ENCODE measurements at regions of chr3 and their contacts with region 1.

Region 1: GRCh38 chr3:171459942-171460724 is at the start of gene TNIK:
- DNase-seq: peak; percentile 95
- ATAC-seq: peak; percentile 85
- H3K4me3 ChIP-seq: peak within 1 kb of the TSS; percentile 98
- H3K27ac ChIP-seq: peak within 1 kb of the TSS; percentile 80
- H3K4me1 ChIP-seq: peaks cover 10% of the 10 kb centered on the region
- H3K27me3 ChIP-seq: no peaks in the 10 kb centered on the region
- CTCF ChIP-seq: peak in 2 of 3 experiments; percentile 26 to 44; a peak in 2 of 6 replicates
- EP300 ChIP-seq: peak; percentile 40 to 60; a peak in 2 of 4 replicates
- POLR2A ChIP-seq: peak; percentile 91
- RAD21 ChIP-seq: peak; percentile 23; the same call in 1 of the 2 replicates
- polyA plus RNA-seq, gene TNIK: 13.9 to 15.9 TPM

Region 2: GRCh38 chr3:171072432-171072831 is 387.7 kb before region 1 on chr3:
- CTCF ChIA-PET with region 1: no interaction called
- POLR2A ChIA-PET with region 1: no interaction called
- RAD21 ChIA-PET with region 1: no interaction called
- SMC1A ChIA-PET with region 1: no interaction called
- in situ Hi-C with region 1: no loop called
- intact Hi-C with region 1: no loop called
- DNase-seq: no peak
- ATAC-seq: no peak
- H3K4me3 ChIP-seq: no peak overlapping the region
- H3K27ac ChIP-seq: no peak overlapping the region
- H3K4me1 ChIP-seq: no peaks in the 10 kb centered on the region
- H3K27me3 ChIP-seq: no peaks in the 10 kb centered on the region
- CTCF ChIP-seq: no peak
- EP300 ChIP-seq: no peak
- POLR2A ChIP-seq: no peak
- RAD21 ChIP-seq: no peak

Region 3: GRCh38 chr3:171162986-171163723 is 297.0 kb before region 1 on chr3:
- CTCF ChIA-PET with region 1: interaction called, 5 read pairs
- POLR2A ChIA-PET with region 1: interaction called, 3 read pairs
- RAD21 ChIA-PET with region 1: interaction called, 3 read pairs
- SMC1A ChIA-PET with region 1: interaction called, 8 read pairs
- in situ Hi-C with region 1: no loop called
- intact Hi-C with region 1: loop called (anchors 1 kb)
- DNase-seq: no peak
- ATAC-seq: peak; percentile 50
- H3K4me3 ChIP-seq: no peak overlapping the region
- H3K27ac ChIP-seq: no peak overlapping the region; the same call in 1 of the 2 replicates
- H3K4me1 ChIP-seq: peaks cover 14% of the 10 kb centered on the region
- H3K27me3 ChIP-seq: no peaks in the 10 kb centered on the region
- CTCF ChIP-seq: peak; percentile 58 to 87 (median 63); a peak in 5 of 6 replicates
- EP300 ChIP-seq: no peak
- POLR2A ChIP-seq: no peak
- RAD21 ChIP-seq: peak; percentile 77

Region 4: DNA sequence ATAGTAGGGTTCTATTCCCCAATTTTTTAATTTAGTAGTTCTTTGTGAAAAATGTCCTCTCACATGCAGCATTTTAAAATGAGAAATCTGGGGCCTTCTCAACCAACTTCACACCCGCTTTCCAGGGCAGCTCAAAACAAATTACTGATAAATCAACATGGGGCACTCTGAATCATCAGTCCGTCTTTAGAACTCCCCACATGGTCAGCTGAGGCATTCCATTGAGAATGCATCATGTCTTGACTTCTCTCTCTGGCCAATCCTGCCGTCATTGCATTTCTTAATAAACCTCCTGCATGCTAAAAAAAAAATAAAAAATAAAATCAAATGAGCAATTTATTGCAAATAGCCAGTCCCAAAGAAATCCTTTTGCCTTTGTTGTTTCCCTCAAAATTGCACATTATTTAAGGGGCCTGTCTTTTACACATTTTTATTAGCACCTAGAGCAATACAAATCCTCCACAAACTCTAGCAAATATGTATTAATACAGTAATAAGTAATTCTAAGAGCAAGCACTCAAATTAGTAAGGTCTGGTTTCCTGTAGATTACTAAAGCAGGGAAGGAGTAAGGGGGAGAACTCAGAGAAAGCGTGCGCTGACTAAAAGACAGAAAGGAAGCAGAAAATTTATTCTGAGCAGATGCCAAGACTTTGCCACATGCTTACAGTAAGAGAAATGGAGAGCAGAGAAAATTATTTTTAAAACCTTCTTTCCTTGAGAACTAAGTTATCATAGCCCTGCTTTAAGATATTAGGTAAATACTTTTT is 175.6 kb before region 1 on chr3:
- CTCF ChIA-PET with region 1: interaction called, 3 read pairs
- POLR2A ChIA-PET with region 1: no interaction called
- RAD21 ChIA-PET with region 1: interaction called, 6 read pairs
- SMC1A ChIA-PET with region 1: interaction called, 12 read pairs
- in situ Hi-C with region 1: no loop called
- intact Hi-C with region 1: loop called (anchors 2 kb)
- DNase-seq: peak; percentile 76
- ATAC-seq: peak; percentile 64
- H3K4me3 ChIP-seq: peak overlapping the region; percentile 36; the same call in 1 of the 2 replicates
- H3K27ac ChIP-seq: peak overlapping the region; percentile 96
- H3K4me1 ChIP-seq: peaks cover 61% of the 10 kb centered on the region
- H3K27me3 ChIP-seq: no peaks in the 10 kb centered on the region
- CTCF ChIP-seq: no peak
- EP300 ChIP-seq: peak in 1 of 2 experiments; percentile 21; a peak in 1 of 4 replicates
- POLR2A ChIP-seq: no peak
- RAD21 ChIP-seq: no peak

Region 5: GRCh38 chr3:171447338-171447760 is 12.8 kb before region 1 on chr3:
- CTCF ChIA-PET with region 1: interaction called, 6 read pairs
- POLR2A ChIA-PET with region 1: interaction called, 5 read pairs
- RAD21 ChIA-PET with region 1: interaction called, 9 read pairs
- SMC1A ChIA-PET with region 1: interaction called, 10 read pairs
- in situ Hi-C with region 1: no loop called
- intact Hi-C with region 1: no loop called
- DNase-seq: no peak
- ATAC-seq: peak; percentile 37
- H3K4me3 ChIP-seq: no peak overlapping the region
- H3K27ac ChIP-seq: no peak overlapping the region
- H3K4me1 ChIP-seq: peaks cover 28% of the 10 kb centered on the region
- H3K27me3 ChIP-seq: no peaks in the 10 kb centered on the region
- CTCF ChIP-seq: no peak
- EP300 ChIP-seq: no peak
- POLR2A ChIP-seq: no peak
- RAD21 ChIP-seq: no peak

Region 6: GRCh38 chr3:171809821-171810628 is 349.9 kb after region 1 on chr3 and contains the start of gene PLD1:
- CTCF ChIA-PET with region 1: no interaction called
- POLR2A ChIA-PET with region 1: no interaction called
- RAD21 ChIA-PET with region 1: no interaction called
- SMC1A ChIA-PET with region 1: no interaction called
- in situ Hi-C with region 1: no loop called
- intact Hi-C with region 1: loop called (anchors 10 kb)
- DNase-seq: no peak
- ATAC-seq: peak; percentile 72
- H3K4me3 ChIP-seq: peak within 1 kb of the TSS; percentile 69
- H3K27ac ChIP-seq: peak within 1 kb of the TSS; percentile 45
- H3K4me1 ChIP-seq: no peaks in the 10 kb centered on the region
- H3K27me3 ChIP-seq: no peaks in the 10 kb centered on the region
- CTCF ChIP-seq: 0 out of 6 replicates have a peak, but pooled peaks of 1 of the 3 experiments have one; percentile 5
- EP300 ChIP-seq: peak; percentile 6 to 12; a peak in 2 of 4 replicates
- POLR2A ChIP-seq: no peak
- RAD21 ChIP-seq: no peak
- polyA plus RNA-seq, gene PLD1: 3.1 to 3.4 TPM

Measured in GM12878 (cell line).